Mucosa of descending colon (tissue), 3 donors: ENCODE measurements at regions of chr12 and their contacts with region 1.

Region 1: GRCh38 chr12:123043536-123044001 is 63.1 kb downstream of the ARL6IP4 start:
- DNase-seq: peak; percentile 83 to 90 (median 88)
- ATAC-seq: peak; percentile 86
- H3K4me3 ChIP-seq: no peak overlapping the region
- H3K4me1 ChIP-seq: peaks cover 9% of the 10 kb centered on the region
- CTCF ChIP-seq: peak; percentile 41

Region 2: DNA sequence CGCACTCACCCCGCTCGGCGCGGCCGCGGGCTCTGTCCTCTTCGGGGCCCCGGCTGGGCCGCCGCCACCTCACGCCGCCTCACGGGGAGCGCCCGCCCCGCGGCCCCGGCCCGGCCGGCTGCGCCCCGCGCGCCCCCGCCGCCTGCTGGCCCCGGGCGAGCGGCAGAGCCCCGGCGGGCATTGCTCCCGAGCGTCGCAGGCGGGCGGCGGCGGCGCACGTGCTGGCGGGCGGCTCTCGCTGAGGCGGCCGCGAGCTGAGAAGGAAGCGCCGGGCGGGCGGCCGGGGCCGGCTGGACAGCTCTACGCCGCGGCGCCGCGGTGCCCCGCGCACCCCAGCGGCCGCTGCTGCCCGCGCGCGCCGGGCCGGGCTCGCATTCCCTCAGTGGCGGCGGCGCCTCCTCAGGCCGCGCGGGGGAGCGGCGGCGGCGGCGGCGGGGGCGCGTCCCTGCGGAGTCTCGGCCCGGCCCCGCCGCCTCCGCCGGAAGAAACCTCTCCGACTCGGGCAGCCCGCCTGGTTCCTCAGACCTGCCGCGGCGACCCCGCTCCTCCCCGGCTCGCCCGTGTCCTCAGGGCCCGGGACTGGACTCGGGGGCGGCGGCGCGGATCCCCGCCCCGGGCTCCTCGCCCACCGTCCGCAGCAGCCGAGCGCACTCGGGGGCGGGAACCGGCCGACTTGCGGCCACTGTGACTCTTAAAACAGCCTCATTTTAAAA is 107.3 kb after region 1 on chr12 and contains the start of gene PITPNM2:
- intact Hi-C with region 1: loop called (anchors 5 to 10 kb)
- DNase-seq: peak; percentile 68 to 80 (median 74)
- ATAC-seq: peak; percentile 89
- H3K4me3 ChIP-seq: peak within 1 kb of the TSS; percentile 47
- H3K4me1 ChIP-seq: no peaks in the 10 kb centered on the region
- CTCF ChIP-seq: peak; percentile 36
- total RNA-seq, gene PITPNM2: 16.7 to 22.7 (median 20.8) TPM

Region 3: GRCh38 chr12:123232807-123233543 is 189.4 kb after region 1 on chr12 and contains the starts of genes MPHOSPH9 and MTRFR:
- intact Hi-C with region 1: loop called in 1 of 2 experiments (anchors 10 kb)
- DNase-seq: peak; percentile 98 to 99 (median 98)
- ATAC-seq: peak; percentile 98
- H3K4me3 ChIP-seq: peak within 1 kb of the TSS; percentile 58
- H3K4me1 ChIP-seq: peaks cover 20% of the 10 kb centered on the region
- CTCF ChIP-seq: peak; percentile 8
- total RNA-seq, gene MPHOSPH9: 19.6 to 28.7 (median 19.8) TPM
- total RNA-seq, gene MTRFR: 9.0 to 11.2 (median 10.4) TPM